ENCODE measurements at regions of chr12 and their contacts with region 1.

Region 1: GRCh38 chr12:102182635-102183034 is 15.0 kb downstream of the PMCH start:
- DNase-seq: no peak
- H3K4me3 Mint-ChIP-seq: no peak overlapping the region
- H3K27ac Mint-ChIP-seq: peak overlapping the region; percentile 73
- H3K4me1 Mint-ChIP-seq: peaks cover 11% of the 10 kb centered on the region
- H3K27me3 Mint-ChIP-seq: no peaks in the 10 kb centered on the region

Region 2: GRCh38 chr12:101925361-101925760 is 257.3 kb before region 1 on chr12:
- intact Hi-C with region 1: no loop called
- DNase-seq: no peak
- H3K4me3 Mint-ChIP-seq: no peak overlapping the region
- H3K27ac Mint-ChIP-seq: no peak overlapping the region
- H3K4me1 Mint-ChIP-seq: peaks cover 18% of the 10 kb centered on the region
- H3K27me3 Mint-ChIP-seq: no peaks in the 10 kb centered on the region

Region 3: GRCh38 chr12:102204025-102204424 is 21.4 kb after region 1 on chr12:
- intact Hi-C with region 1: loop called (anchors 1 kb)
- DNase-seq: no peak
- H3K4me3 Mint-ChIP-seq: no peak overlapping the region
- H3K27ac Mint-ChIP-seq: peak overlapping the region; percentile 86
- H3K4me1 Mint-ChIP-seq: peaks cover 44% of the 10 kb centered on the region
- H3K27me3 Mint-ChIP-seq: no peaks in the 10 kb centered on the region